CD4-positive, alpha-beta T cell (primary cell): ENCODE measurements at regions of chr11 and their contacts with region 1.

Region 1: GRCh38 chr11:3205261-3206135 is 13.1 kb downstream of the MRGPRG start:
- DNase-seq: peak in 1 of 14 experiments; percentile 31
- ATAC-seq: no peak
- H3K4me3 ChIP-seq: no peak overlapping the region
- H3K4me3 Mint-ChIP-seq: no peak overlapping the region
- H3K27ac ChIP-seq: no peak overlapping the region
- H3K27ac Mint-ChIP-seq: no peak overlapping the region
- H3K4me1 ChIP-seq: no peaks in the 10 kb centered on the region
- H3K4me1 Mint-ChIP-seq: no peaks in the 10 kb centered on the region
- H3K27me3 ChIP-seq: peaks cover 19 to 21% of the 10 kb centered on the region in 2 experiments
- H3K27me3 Mint-ChIP-seq: peaks cover 22% of the 10 kb centered on the region
- CTCF ChIP-seq: no peak

Region 2: GRCh38 chr11:3119141-3119821 is 86.2 kb before region 1 on chr11:
- CTCF ChIA-PET with region 1: no interaction called
- POLR2A ChIA-PET with region 1: no interaction called
- intact Hi-C with region 1: loop called in 1 of 2 experiments (anchors 5 kb)
- DNase-seq: no peak
- ATAC-seq: no peak
- H3K4me3 ChIP-seq: no peak overlapping the region
- H3K4me3 Mint-ChIP-seq: no peak overlapping the region
- H3K27ac ChIP-seq: no peak overlapping the region
- H3K27ac Mint-ChIP-seq: no peak overlapping the region
- H3K4me1 ChIP-seq: peaks cover under 1% of the 10 kb centered on the region
- H3K4me1 Mint-ChIP-seq: no peaks in the 10 kb centered on the region
- H3K27me3 ChIP-seq: no peaks in the 10 kb centered on the region
- H3K27me3 Mint-ChIP-seq: no peaks in the 10 kb centered on the region
- CTCF ChIP-seq: no peak